Psoas muscle (tissue), 8 donors: ENCODE measurements at regions of chr2 and their contacts with region 1.

Region 1: DNA sequence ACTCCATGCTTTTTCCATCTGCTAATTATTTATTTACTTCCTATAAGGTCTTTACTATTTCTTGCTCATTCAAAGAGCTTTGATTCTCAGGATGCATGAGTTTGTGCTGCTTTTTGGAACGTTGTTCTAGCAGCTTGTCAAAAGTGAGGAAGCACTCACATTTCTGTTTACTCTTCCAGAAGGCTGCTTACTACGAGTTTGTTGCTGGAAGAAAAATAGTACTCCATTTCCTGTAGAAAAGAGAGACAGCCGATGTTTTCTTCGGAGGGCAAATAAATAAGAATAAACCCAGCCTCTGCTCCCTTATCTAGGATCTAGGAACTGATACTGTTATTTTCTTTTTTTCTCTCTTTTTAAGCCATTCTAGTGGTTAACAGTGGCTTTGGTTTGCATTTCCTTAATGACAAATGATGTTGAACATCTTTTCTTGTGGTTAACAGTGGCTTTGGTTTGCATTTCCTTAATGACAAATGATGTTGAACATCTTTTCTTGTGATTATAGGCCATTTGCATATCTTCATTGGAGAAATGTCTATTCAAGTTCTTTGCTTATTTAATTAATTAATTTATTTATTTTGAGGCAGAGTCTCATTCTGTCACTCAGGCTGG is 20.5 kb downstream of the CYP27A1 start:
- DNase-seq: no peak
- ATAC-seq: no peak
- H3K4me3 ChIP-seq: no peak overlapping the region
- H3K27ac ChIP-seq: peak overlapping the region; percentile 60
- H3K4me1 ChIP-seq: peaks cover 29% of the 10 kb centered on the region
- H3K27me3 ChIP-seq: no peaks in the 10 kb centered on the region
- CTCF ChIP-seq: no peak

Region 2: GRCh38 chr2:218745160-218745558 is 57.3 kb before region 1 on chr2:
- intact Hi-C with region 1: no loop called
- DNase-seq: no peak
- ATAC-seq: peak; percentile 46 to 60 (median 53)
- H3K4me3 ChIP-seq: no peak overlapping the region
- H3K27ac ChIP-seq: no peak overlapping the region
- H3K4me1 ChIP-seq: peaks cover 12% of the 10 kb centered on the region
- H3K27me3 ChIP-seq: no peaks in the 10 kb centered on the region
- CTCF ChIP-seq: no peak

Region 3: GRCh38 chr2:218839430-218839829 is 36.9 kb after region 1 on chr2:
- intact Hi-C with region 1: loop called (anchors 5 kb)
- DNase-seq: peak in 1 of 2 donors; percentile 29
- ATAC-seq: peak; percentile 79 to 93 (median 87)
- H3K4me3 ChIP-seq: no peak overlapping the region
- H3K27ac ChIP-seq: peak overlapping the region; percentile 54
- H3K4me1 ChIP-seq: peaks cover 19% of the 10 kb centered on the region
- H3K27me3 ChIP-seq: no peaks in the 10 kb centered on the region
- CTCF ChIP-seq: no peak